PC-9 (cell line): ENCODE measurements at regions of chr2 and their contacts with region 1.

Region 1: GRCh38 chr2:234989183-234989701 is 37.4 kb downstream of the SH3BP4 start:
- DNase-seq: peak; percentile 64 to 98
- H3K4me3 ChIP-seq: no peak overlapping the region
- H3K27ac ChIP-seq: peak overlapping the region; percentile 14; the same call in 1 of the 2 replicates
- H3K4me1 ChIP-seq: peaks cover 36% of the 10 kb centered on the region
- H3K27me3 ChIP-seq: no peaks in the 10 kb centered on the region
- CTCF ChIP-seq: no peak

Region 2: GRCh38 chr2:234873103-234873827 is 116.0 kb before region 1 on chr2:
- CTCF ChIA-PET with region 1: no interaction called
- POLR2A ChIA-PET with region 1: interaction called, 10 read pairs
- intact Hi-C with region 1: no loop called
- DNase-seq: no peak
- H3K4me3 ChIP-seq: no peak overlapping the region
- H3K27ac ChIP-seq: no peak overlapping the region
- H3K4me1 ChIP-seq: no peaks in the 10 kb centered on the region
- H3K27me3 ChIP-seq: no peaks in the 10 kb centered on the region
- CTCF ChIP-seq: no peak